ENCODE measurements at regions of chr1 and their contacts with region 1.

Region 1: DNA sequence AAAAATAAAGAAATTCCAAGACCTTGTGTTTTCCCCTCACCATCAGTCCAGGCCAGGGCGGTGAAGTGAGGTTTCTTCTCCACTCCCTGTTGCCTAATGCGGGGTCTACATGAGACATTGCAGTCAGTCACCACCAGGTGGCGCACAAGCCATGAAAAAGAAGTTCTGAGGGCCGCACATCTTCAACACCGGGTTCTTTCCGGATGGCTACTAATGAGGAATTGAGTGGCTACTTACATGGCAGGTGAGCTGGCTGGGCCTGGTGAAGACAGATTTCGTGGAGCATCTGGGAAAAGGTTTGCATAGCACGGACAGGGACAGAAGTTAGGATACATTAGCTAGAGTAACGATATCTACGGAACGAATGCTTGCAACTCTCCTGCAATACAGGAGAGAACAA is 15.8 kb upstream of the S100A11 start:
- DNase-seq: peak; percentile 91 to 96
- ATAC-seq: peak; percentile 76
- H3K4me3 ChIP-seq: no peak overlapping the region
- H3K27ac ChIP-seq: no peak overlapping the region
- H3K4me1 ChIP-seq: no peaks in the 10 kb centered on the region
- H3K27me3 ChIP-seq: no peaks in the 10 kb centered on the region

Region 2: DNA sequence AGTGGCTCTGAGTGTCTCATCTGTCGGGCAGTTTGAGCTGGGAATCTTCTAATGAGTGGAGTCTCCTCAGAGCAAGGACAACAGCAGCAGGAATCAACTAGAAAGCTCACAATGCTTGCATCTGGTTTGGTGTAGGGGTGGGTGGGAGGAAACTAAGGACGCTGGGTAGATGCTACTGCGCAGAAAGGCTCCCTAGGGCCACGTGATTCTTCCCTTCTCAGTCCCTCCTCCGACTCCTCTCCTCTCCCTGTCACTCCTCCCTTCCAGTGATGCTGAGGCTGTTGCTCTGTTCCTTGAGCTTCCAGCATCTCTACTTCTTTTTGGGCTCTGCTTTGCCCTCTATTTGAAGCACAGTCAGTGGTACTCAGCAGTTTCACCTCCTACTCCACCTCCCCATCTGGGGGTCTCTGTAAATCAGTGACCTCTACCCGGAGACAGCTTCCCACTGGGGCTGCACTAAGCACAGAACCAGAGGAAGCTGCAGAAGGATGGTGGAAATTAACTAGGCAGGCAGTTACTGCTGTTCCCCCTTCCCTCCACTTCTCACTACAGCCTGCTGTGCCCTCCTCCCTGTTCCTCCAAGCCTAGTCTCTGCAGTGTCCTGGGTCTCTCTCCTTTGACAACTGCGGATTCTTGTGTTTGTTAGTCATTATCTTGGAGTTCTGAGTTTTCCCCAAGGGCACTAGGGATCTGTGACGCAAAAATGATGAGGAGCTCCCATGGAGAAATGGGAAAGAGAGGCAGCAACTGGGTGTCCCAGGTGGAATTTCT is 253.2 kb before region 1 on chr1:
- intact Hi-C with region 1: no loop called
- DNase-seq: no peak
- ATAC-seq: no peak
- H3K4me3 ChIP-seq: no peak overlapping the region
- H3K27ac ChIP-seq: no peak overlapping the region
- H3K4me1 ChIP-seq: no peaks in the 10 kb centered on the region
- H3K27me3 ChIP-seq: no peaks in the 10 kb centered on the region

Region 3: GRCh38 chr1:152118915-152119314 is 66.3 kb after region 1 on chr1:
- intact Hi-C with region 1: no loop called
- DNase-seq: no peak
- ATAC-seq: no peak
- H3K4me3 ChIP-seq: no peak overlapping the region
- H3K27ac ChIP-seq: no peak overlapping the region
- H3K4me1 ChIP-seq: no peaks in the 10 kb centered on the region
- H3K27me3 ChIP-seq: no peaks in the 10 kb centered on the region

Region 4: DNA sequence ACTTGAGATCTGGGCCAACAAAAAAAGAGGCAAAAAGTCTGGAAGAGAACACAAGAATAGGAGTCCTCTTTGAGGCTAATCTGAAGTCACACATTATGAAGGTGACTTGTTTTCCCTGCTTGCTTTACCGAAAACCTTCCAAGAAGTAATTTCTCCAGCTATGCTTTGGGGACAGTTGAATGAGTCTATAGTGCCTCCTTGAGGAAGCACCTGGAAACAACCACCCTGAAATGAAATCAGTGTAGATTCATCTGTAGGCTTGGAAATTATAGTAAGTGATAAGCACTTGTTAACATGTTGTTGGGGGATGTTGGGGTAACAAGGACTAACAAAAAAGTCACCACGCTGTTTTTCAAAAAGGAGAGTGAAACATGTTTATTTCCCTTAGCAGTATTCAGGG is 129.8 kb after region 1 on chr1:
- intact Hi-C with region 1: loop called (anchors 2 kb)
- DNase-seq: no peak
- ATAC-seq: no peak
- H3K4me3 ChIP-seq: no peak overlapping the region
- H3K27ac ChIP-seq: no peak overlapping the region
- H3K4me1 ChIP-seq: no peaks in the 10 kb centered on the region
- H3K27me3 ChIP-seq: no peaks in the 10 kb centered on the region

Region 5: DNA sequence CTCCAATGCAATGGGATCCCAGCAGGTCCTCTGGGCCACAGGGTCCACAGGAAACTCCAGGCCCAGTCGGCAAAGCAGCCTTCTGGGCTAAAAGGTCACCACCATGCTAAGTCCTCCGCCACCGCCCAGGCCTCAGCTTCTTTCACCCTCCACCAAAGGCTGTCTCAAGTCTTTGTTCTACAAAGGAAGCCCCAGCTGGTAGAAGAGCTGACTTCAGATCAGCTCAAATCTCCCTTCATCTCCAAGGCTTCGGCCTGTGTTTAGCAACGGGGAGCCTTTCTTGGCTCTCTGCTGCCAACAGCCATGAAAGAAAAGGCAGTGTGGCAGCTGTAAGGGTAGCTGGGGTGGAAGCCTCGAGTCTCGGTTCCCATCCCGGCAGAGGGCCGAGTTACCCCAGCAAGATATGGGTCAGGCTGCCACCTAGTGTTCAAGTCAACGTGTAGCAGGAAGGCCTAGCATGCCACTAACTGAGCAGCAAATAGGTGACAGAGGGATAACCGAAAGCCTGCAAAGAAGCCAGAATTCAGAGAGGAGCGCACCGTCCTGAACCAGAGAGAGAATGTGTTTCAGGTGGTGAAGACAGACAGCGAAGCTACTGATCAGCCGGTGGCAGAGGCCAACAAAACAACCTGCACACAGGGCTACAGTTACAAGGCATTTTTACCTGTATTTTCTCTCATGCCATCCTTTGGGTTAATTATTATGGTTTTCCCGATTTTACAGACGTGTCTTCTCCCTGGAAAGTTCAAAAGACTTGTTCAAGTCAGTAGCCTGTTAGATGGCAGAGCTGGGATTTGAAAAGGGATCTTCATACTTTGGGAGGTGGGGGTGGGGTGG is 388.2 kb after region 1 on chr1:
- intact Hi-C with region 1: loop called (anchors 5 kb)
- DNase-seq: peak; percentile 74 to 85
- ATAC-seq: peak; percentile 87
- H3K4me3 ChIP-seq: no peak overlapping the region
- H3K27ac ChIP-seq: no peak overlapping the region
- H3K4me1 ChIP-seq: no peaks in the 10 kb centered on the region
- H3K27me3 ChIP-seq: no peaks in the 10 kb centered on the region

Region 6: GRCh38 chr1:152459596-152460528 is 407.3 kb after region 1 on chr1:
- intact Hi-C with region 1: loop called (anchors 5 kb)
- DNase-seq: peak; percentile 84 to 90
- ATAC-seq: peak; percentile 68
- H3K4me3 ChIP-seq: peak overlapping the region in 1 of 2 donors; percentile 11
- H3K27ac ChIP-seq: no peak overlapping the region
- H3K4me1 ChIP-seq: peaks cover 0 to 2% of the 10 kb centered on the region in 2 donors
- H3K27me3 ChIP-seq: no peaks in the 10 kb centered on the region

Measured in aorta (tissue), 5 donors.